Mammary epithelial cell (primary cell): ENCODE measurements at regions of chr22 and their contacts with region 1.

Region 1: GRCh38 chr22:38398609-38399461 is 56.2 kb downstream of the KCNJ4 start:
- DNase-seq: peak; percentile 64
- H3K4me3 ChIP-seq: peak overlapping the region; percentile 64 to 80 (median 78)
- H3K27ac ChIP-seq: peak overlapping the region; percentile 40
- H3K4me1 ChIP-seq: peaks cover 14% of the 10 kb centered on the region
- H3K27me3 ChIP-seq: no peaks in the 10 kb centered on the region
- CTCF ChIP-seq: no peak

Region 2: GRCh38 chr22:38298312-38299000 is 100.4 kb before region 1 on chr22:
- CTCF ChIA-PET with region 1: no interaction called
- dilution Hi-C with region 1: no loop called
- in situ Hi-C with region 1: no loop called
- intact Hi-C with region 1: loop called (anchors 5 kb)
- DNase-seq: peak; percentile 100
- H3K4me3 ChIP-seq: no peak overlapping the region
- H3K27ac ChIP-seq: peak overlapping the region; percentile 93
- H3K4me1 ChIP-seq: peaks cover 55% of the 10 kb centered on the region
- H3K27me3 ChIP-seq: no peaks in the 10 kb centered on the region
- CTCF ChIP-seq: peak; percentile 59

Region 3: GRCh38 chr22:38435010-38435409 is 36.2 kb after region 1 on chr22:
- CTCF ChIA-PET with region 1: no interaction called
- dilution Hi-C with region 1: loop called (anchors 5 kb)
- in situ Hi-C with region 1: no loop called
- intact Hi-C with region 1: no loop called
- DNase-seq: no peak
- H3K4me3 ChIP-seq: no peak overlapping the region
- H3K27ac ChIP-seq: no peak overlapping the region
- H3K4me1 ChIP-seq: no peaks in the 10 kb centered on the region
- H3K27me3 ChIP-seq: no peaks in the 10 kb centered on the region
- CTCF ChIP-seq: no peak